ENCODE measurements at regions of chr2 and their contacts with region 1.

Region 1: GRCh38 chr2:101188683-101189405 is 37.7 kb upstream of the TBC1D8 start:
- DNase-seq: peak in 1 of 2 experiments; percentile 84
- H3K4me3 ChIP-seq: no peak overlapping the region
- H3K27ac ChIP-seq: no peak overlapping the region
- H3K4me1 ChIP-seq: peaks cover 0 to 10% (median 2%) of the 10 kb centered on the region in 4 experiments; a peak in 4 of 7 replicates
- H3K27me3 ChIP-seq: no peaks in the 10 kb centered on the region
- CTCF ChIP-seq: peak; percentile 58 to 70 (median 69)
- EP300 ChIP-seq: no peak
- POLR2A ChIP-seq: no peak
- RAD21 ChIP-seq: peak; percentile 38 to 62; a peak in 3 of 4 replicates

Region 2: GRCh38 chr2:100902833-100903405 is 285.9 kb before region 1 on chr2:
- CTCF ChIA-PET with region 1: no interaction called
- POLR2A ChIA-PET with region 1: no interaction called
- DNase-seq: no peak
- H3K4me3 ChIP-seq: no peak overlapping the region
- H3K27ac ChIP-seq: no peak overlapping the region
- H3K4me1 ChIP-seq: no peaks in the 10 kb centered on the region
- H3K27me3 ChIP-seq: no peaks in the 10 kb centered on the region
- CTCF ChIP-seq: no peak
- EP300 ChIP-seq: no peak
- POLR2A ChIP-seq: no peak
- RAD21 ChIP-seq: no peak

Region 3: DNA sequence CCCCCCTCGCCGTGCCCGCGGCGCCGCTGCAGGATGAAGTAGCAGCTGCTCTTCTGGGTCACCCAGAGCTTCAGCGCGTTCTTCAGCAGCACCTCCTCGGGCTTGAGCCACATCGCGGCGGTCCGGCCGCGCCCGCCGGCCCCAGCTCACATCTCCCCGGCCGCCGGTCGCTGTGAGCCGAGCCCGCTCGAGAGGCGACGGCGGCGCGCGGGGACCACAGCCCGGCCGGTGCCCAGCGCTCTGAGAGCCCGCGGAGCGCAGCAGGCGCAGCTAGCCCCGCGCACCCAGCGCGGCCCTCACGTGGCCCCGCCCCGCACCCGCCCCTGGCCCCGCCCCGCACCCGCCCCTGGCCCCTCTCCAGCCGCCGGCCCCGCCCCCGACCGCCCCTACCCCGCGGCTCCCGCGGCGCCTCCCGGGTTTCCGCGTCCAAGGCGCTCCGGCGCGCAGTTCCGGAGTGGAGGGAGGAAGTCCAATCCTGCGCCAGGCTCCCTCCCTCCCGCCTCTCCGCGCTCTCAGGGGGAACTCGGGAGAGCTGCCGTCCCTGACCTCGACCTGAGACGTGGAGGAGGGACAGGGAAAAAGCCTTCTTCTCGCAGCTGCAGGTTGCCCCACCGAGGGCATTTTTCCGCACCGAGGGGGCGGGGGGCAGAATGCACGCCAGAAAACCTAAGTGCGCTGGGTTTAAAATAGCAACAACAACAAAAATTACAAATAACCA is 37.5 kb before region 1 on chr2 and contains the start of gene TBC1D8:
- CTCF ChIA-PET with region 1: interaction called, 10 read pairs
- POLR2A ChIA-PET with region 1: no interaction called
- DNase-seq: peak in 1 of 2 experiments; percentile 89
- H3K4me3 ChIP-seq: peak within 1 kb of the TSS; percentile 62 to 81 (median 72)
- H3K27ac ChIP-seq: no peak within 1 kb of the TSS
- H3K4me1 ChIP-seq: peaks cover 6 to 12% (median 9%) of the 10 kb centered on the region in 4 experiments
- H3K27me3 ChIP-seq: peaks cover 0 to 8% (median 2%) of the 10 kb centered on the region in 4 experiments; a peak in 4 of 7 replicates
- CTCF ChIP-seq: no peak
- EP300 ChIP-seq: no peak
- POLR2A ChIP-seq: peak in 1 of 2 experiments; percentile 42; a peak in 1 of 3 replicates
- RAD21 ChIP-seq: no peak
- total RNA-seq, gene TBC1D8: 21.8 and 24.0 TPM in 2 replicates

Region 4: GRCh38 chr2:101160454-101160853 is 28.4 kb before region 1 on chr2:
- CTCF ChIA-PET with region 1: interaction called, 14 read pairs
- POLR2A ChIA-PET with region 1: no interaction called
- DNase-seq: no peak
- H3K4me3 ChIP-seq: no peak overlapping the region
- H3K27ac ChIP-seq: no peak overlapping the region
- H3K4me1 ChIP-seq: peaks cover 1 to 12% (median 2%) of the 10 kb centered on the region in 4 experiments; a peak in 5 of 7 replicates
- H3K27me3 ChIP-seq: no peaks in the 10 kb centered on the region
- CTCF ChIP-seq: no peak
- EP300 ChIP-seq: no peak
- POLR2A ChIP-seq: no peak
- RAD21 ChIP-seq: no peak

Region 5: GRCh38 chr2:101173707-101174295 is 15.0 kb before region 1 on chr2:
- CTCF ChIA-PET with region 1: interaction called, 16 read pairs
- POLR2A ChIA-PET with region 1: no interaction called
- DNase-seq: no peak
- H3K4me3 ChIP-seq: no peak overlapping the region
- H3K27ac ChIP-seq: no peak overlapping the region
- H3K4me1 ChIP-seq: no peaks in the 10 kb centered on the region
- H3K27me3 ChIP-seq: no peaks in the 10 kb centered on the region; a peak in 1 of 7 replicates
- CTCF ChIP-seq: no peak
- EP300 ChIP-seq: no peak
- POLR2A ChIP-seq: no peak
- RAD21 ChIP-seq: no peak

Region 6: DNA sequence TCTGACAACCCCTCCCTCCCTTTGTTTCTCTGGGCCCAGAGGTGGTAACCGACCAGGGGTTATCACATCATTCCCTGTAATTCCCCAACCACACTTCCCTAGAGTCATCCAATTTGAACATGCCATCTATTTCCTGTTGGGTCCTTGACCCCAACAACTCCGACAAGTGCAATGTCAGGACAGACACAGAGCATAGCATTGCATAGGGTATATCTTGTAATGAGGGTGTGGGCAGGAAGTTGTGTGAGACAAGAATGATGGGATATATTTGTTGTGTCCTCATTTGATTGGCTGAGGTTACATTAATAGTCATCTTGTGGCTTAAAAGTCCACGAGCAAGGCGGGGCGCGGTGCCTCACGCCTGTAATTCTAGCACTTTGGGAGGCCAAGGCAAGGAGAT is 30.4 kb after region 1 on chr2:
- CTCF ChIA-PET with region 1: interaction called, 18 read pairs
- POLR2A ChIA-PET with region 1: no interaction called
- DNase-seq: no peak
- H3K4me3 ChIP-seq: no peak overlapping the region
- H3K27ac ChIP-seq: no peak overlapping the region
- H3K4me1 ChIP-seq: no peaks in the 10 kb centered on the region
- H3K27me3 ChIP-seq: no peaks in the 10 kb centered on the region
- CTCF ChIP-seq: no peak
- EP300 ChIP-seq: no peak
- POLR2A ChIP-seq: no peak
- RAD21 ChIP-seq: no peak

Region 7: DNA sequence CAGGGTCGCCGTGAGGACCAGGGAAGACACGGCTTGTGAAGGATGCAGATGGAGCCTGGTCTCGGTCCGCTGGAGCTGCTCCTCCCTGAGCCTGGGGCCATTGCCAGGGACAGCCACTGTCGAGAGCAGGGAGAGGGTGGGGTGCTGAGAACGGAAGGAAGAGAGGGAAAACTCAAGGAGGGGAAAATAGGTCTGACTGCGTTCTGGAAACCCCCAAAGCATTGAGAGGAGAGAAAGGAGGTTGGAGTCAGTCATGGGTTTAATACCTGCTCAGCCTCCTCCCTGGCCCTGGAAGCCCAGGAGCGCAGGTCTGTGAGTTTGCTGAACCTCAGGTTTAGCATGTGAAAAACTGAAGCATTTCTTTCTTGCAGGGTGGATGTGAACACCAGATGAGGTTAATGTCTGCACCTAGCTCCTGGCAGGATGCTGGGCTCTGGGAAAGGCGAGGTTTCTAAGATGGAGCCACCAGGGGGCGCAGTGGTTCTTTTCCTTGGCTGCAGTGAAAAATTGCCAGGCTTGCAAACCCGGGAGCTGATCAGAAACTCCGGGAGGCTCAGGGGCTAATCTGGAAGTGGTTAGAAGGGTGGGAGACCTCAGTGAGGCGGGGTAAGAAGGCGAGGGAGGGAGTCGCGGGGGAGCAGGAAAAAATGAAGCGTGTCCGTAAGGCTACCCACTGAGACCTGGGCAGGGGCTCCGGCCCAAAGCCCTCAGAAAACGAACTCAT is 153.2 kb after region 1 on chr2:
- CTCF ChIA-PET with region 1: no interaction called
- POLR2A ChIA-PET with region 1: no interaction called
- DNase-seq: peak; percentile 68 to 97
- H3K4me3 ChIP-seq: no peak overlapping the region
- H3K27ac ChIP-seq: no peak overlapping the region
- H3K4me1 ChIP-seq: peaks cover 7 to 19% (median 12%) of the 10 kb centered on the region in 4 experiments
- H3K27me3 ChIP-seq: no peaks in the 10 kb centered on the region
- CTCF ChIP-seq: peak; percentile 74 to 88 (median 85)
- EP300 ChIP-seq: no peak
- POLR2A ChIP-seq: no peak
- RAD21 ChIP-seq: peak; percentile 86 to 89